Endothelial cell of umbilical vein (primary cell): ENCODE measurements at regions of chr22 and their contacts with region 1.

Region 1: GRCh38 chr22:50236731-50237409 is 8.0 kb downstream of the TUBGCP6 start:
- DNase-seq: no peak
- H3K4me3 ChIP-seq: no peak overlapping the region
- H3K27ac ChIP-seq: no peak overlapping the region
- H3K4me1 ChIP-seq: peaks cover 4% of the 10 kb centered on the region
- H3K27me3 ChIP-seq: no peaks in the 10 kb centered on the region
- CTCF ChIP-seq: peak; percentile 45 to 53
- POLR2A ChIP-seq: no peak

Region 2: GRCh38 chr22:49767355-49768062 is 469.4 kb before region 1 on chr22:
- CTCF ChIA-PET with region 1: interaction called, 10 read pairs
- POLR2A ChIA-PET with region 1: no interaction called
- dilution Hi-C with region 1: no loop called
- intact Hi-C with region 1: no loop called
- DNase-seq: peak; percentile 64
- H3K4me3 ChIP-seq: no peak overlapping the region
- H3K27ac ChIP-seq: no peak overlapping the region
- H3K4me1 ChIP-seq: no peaks in the 10 kb centered on the region
- H3K27me3 ChIP-seq: no peaks in the 10 kb centered on the region
- CTCF ChIP-seq: peak; percentile 60 to 64
- POLR2A ChIP-seq: no peak

Region 3: GRCh38 chr22:50270666-50271394 is 34.0 kb after region 1 on chr22:
- CTCF ChIA-PET with region 1: no interaction called
- POLR2A ChIA-PET with region 1: no interaction called
- dilution Hi-C with region 1: no loop called
- intact Hi-C with region 1: no loop called
- DNase-seq: peak; percentile 61
- H3K4me3 ChIP-seq: peak overlapping the region; percentile 30 to 59 (median 42)
- H3K27ac ChIP-seq: no peak overlapping the region
- H3K4me1 ChIP-seq: peaks cover 12% of the 10 kb centered on the region
- H3K27me3 ChIP-seq: no peaks in the 10 kb centered on the region
- CTCF ChIP-seq: no peak
- POLR2A ChIP-seq: no peak

Region 4: DNA sequence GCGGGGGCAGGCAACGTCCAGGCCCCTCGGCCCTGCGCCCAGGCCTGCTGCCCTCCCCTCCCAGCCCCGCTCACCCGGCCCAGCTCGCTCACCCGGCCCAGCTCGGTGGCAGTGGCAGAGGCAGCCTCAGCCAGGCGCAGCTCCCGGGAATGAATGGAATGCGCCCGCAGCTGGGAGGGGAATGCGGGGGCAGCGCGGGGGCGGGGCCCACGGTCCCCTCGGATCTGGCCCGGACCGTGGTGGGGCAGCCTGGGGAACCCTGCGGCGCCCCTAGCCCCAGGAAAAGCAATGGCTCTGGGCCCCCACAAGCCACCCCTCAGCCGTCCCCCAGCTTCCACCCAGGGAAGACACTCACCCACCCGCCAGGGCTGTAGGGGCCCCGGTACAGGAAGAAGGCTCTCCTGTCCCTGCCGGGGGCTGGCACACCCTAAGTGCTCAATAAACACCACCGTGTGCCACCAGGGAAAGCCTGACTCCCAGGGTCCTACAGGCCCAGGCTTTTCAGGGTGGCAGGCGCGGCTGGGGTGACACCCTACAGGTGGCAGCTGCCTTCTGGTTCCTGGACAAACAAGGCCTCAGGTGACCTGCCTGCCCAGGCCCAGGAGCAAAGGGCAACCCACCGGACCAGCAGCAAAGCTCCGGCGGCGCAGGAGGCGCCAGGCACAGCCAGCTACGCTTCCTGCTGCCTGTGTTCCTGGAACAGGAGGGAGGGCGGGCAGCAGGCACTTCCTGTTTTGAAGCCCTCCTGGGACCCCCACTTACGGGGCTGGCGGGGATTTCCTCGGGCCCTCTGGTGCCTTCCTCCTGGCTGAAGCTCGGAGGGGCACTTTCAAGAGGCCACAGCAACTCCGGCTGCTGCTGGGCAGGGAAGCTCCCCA is 56.8 kb after region 1 on chr22:
- CTCF ChIA-PET with region 1: no interaction called
- POLR2A ChIA-PET with region 1: no interaction called
- dilution Hi-C with region 1: no loop called
- intact Hi-C with region 1: no loop called
- DNase-seq: peak; percentile 83
- H3K4me3 ChIP-seq: peak overlapping the region in 2 of 3 experiments; percentile 6 to 22
- H3K27ac ChIP-seq: peak overlapping the region; percentile 92
- H3K4me1 ChIP-seq: peaks cover 20% of the 10 kb centered on the region
- H3K27me3 ChIP-seq: no peaks in the 10 kb centered on the region
- CTCF ChIP-seq: peak in 1 of 2 donors; percentile 1
- POLR2A ChIP-seq: peak; percentile 9

Region 5: DNA sequence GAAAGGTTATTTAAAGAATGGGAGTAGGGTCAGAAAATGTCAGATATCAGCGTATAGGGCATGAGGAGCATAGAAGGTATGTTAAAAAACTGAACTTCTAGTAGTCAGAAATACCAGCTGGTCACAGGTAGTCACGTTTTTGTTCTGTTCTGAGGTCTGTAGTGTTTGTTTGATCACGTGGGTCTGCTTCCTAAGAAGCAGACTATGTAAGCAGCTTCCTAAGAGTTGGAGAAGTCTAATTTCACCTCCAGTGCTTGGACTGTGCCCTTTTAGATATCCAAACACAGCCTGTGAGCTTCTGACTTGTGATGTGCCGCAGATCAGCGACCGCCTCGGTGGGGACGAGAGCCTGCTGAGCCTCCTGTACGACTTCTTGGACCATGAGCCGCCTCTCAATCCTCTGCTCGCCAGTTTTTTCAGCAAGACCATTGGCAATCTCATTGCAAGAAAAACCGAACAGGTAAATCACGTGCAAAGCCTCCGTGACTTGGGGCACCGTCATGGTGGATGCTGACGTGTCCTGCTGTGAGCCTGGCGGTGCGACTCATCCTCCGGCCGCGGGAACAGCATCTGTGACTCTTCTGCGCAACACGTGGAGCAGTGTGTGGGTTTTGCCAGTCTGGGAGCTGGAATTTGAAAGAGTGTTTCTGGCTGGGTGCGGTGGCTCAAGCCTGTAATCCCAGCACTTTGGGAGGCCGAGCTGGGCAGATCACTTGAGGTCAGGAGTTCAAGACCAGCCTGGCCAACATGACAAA is 169.7 kb after region 1 on chr22:
- CTCF ChIA-PET with region 1: no interaction called
- POLR2A ChIA-PET with region 1: no interaction called
- dilution Hi-C with region 1: no loop called
- intact Hi-C with region 1: no loop called
- DNase-seq: no peak
- H3K4me3 ChIP-seq: no peak overlapping the region
- H3K27ac ChIP-seq: no peak overlapping the region
- H3K4me1 ChIP-seq: peaks cover 8% of the 10 kb centered on the region
- H3K27me3 ChIP-seq: no peaks in the 10 kb centered on the region
- CTCF ChIP-seq: no peak
- POLR2A ChIP-seq: no peak